ENCODE measurements at regions of chr12 and their contacts with region 1.

Region 1: GRCh38 chr12:43789941-43790340 is 16.2 kb downstream of the TWF1 start:
- DNase-seq: no peak
- H3K4me3 Mint-ChIP-seq: no peak overlapping the region
- H3K27ac Mint-ChIP-seq: no peak overlapping the region
- H3K4me1 Mint-ChIP-seq: no peaks in the 10 kb centered on the region
- H3K27me3 Mint-ChIP-seq: no peaks in the 10 kb centered on the region

Region 2: GRCh38 chr12:43444940-43445564 is 344.9 kb before region 1 on chr12:
- CTCF ChIA-PET with region 1: no interaction called
- POLR2A ChIA-PET with region 1: no interaction called
- DNase-seq: peak; percentile 54
- H3K4me3 Mint-ChIP-seq: no peak overlapping the region
- H3K27ac Mint-ChIP-seq: no peak overlapping the region
- H3K4me1 Mint-ChIP-seq: no peaks in the 10 kb centered on the region
- H3K27me3 Mint-ChIP-seq: peaks cover 2% of the 10 kb centered on the region

Region 3: GRCh38 chr12:43776498-43776897 is 13.4 kb before region 1 on chr12:
- CTCF ChIA-PET with region 1: interaction called, 3 read pairs
- POLR2A ChIA-PET with region 1: interaction called, 10 read pairs
- DNase-seq: no peak
- H3K4me3 Mint-ChIP-seq: no peak overlapping the region
- H3K27ac Mint-ChIP-seq: no peak overlapping the region
- H3K4me1 Mint-ChIP-seq: peaks cover 1% of the 10 kb centered on the region
- H3K27me3 Mint-ChIP-seq: no peaks in the 10 kb centered on the region